ENCODE measurements at regions of chr13 and their contacts with region 1.

Region 1: GRCh38 chr13:29771247-29771646 is 79.2 kb downstream of the UBL3 start:
- DNase-seq: peak; percentile 55 to 79 (median 73)
- H3K4me3 ChIP-seq: no peak overlapping the region
- H3K27ac ChIP-seq: no peak overlapping the region
- H3K4me1 ChIP-seq: no peaks in the 10 kb centered on the region
- H3K27me3 ChIP-seq: no peaks in the 10 kb centered on the region

Region 2: DNA sequence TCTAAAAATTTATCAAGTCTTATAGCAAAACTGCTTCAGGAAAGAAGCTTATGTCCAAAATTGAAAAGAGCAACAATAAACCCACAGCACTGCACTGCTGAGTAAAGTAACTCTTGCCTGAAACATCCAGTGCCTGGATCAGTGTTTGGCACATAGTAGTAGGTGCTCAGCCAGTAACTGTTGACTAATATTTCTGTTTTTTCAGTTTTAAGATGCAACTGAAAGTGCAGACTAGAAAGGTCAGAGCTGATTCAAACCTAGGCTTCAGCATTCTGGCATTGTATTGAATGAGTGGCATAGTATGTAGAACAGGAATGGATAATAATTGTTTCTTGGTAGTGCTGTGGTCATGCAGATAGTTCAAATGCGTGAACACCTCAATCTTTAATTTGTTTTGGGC is 11.6 kb after region 1 on chr13:
- CTCF ChIA-PET with region 1: interaction called, 14 read pairs
- POLR2A ChIA-PET with region 1: no interaction called
- DNase-seq: no peak
- H3K4me3 ChIP-seq: no peak overlapping the region
- H3K27ac ChIP-seq: no peak overlapping the region
- H3K4me1 ChIP-seq: no peaks in the 10 kb centered on the region
- H3K27me3 ChIP-seq: no peaks in the 10 kb centered on the region

Region 3: DNA sequence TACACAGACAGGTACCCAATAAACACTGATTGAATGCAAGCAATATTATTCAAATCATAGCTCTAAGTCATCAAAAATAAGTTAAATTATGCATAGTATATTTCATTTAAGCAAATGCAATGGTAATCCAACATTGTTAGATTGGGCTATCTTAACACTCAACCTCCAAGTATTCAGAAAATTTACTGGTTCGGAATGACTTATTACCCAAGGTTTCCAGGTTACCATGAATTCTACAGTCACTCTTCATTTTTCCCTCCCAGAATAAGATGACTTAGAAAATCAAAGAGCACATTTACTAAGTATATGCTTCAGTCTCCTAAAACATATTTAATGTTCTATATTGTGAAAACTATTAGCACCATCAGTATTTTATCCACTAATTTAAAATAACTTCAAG is 73.2 kb after region 1 on chr13:
- CTCF ChIA-PET with region 1: interaction called, 17 read pairs
- POLR2A ChIA-PET with region 1: no interaction called
- DNase-seq: no peak
- H3K4me3 ChIP-seq: no peak overlapping the region
- H3K27ac ChIP-seq: no peak overlapping the region
- H3K4me1 ChIP-seq: peaks cover 8 to 22% (median 12%) of the 10 kb centered on the region in 4 experiments
- H3K27me3 ChIP-seq: no peaks in the 10 kb centered on the region

Region 4: DNA sequence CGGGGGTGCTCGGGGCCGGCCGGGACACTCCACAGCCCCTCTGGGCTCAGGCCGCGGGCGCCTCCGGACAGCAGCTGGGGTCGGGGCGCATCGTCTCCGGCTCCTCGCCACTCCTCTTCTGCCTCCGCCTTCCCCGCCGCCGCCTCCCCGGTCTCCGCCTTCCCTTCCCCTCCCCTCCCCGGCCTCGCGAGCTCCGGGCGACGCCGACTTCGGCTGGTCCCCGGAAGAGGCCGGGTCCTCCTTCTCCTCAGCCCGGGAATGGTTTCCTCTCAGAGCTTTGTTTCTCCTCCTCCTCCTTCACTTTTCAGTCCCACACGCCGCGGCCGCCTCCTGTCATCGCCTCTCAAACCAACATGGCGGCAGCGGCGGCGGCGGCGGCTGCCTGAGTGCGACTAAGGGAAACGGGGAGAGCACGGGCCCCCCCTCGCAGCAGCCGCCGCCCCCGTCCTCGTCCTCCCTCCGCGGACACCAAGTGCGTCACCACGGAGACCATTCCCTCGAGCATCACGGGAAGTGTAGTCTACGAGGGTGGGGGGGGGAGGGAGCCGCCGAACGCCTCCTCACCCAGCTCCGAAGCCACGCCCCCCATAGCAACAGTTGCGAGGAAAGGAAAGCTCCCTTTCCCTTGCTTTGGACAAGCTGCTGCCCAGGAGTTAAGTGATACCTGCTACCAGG is 79.1 kb after region 1 on chr13 and contains the start of gene UBL3:
- CTCF ChIA-PET with region 1: interaction called, 17 read pairs
- POLR2A ChIA-PET with region 1: no interaction called
- DNase-seq: peak; percentile 96 to 98 (median 97)
- H3K4me3 ChIP-seq: peak within 1 kb of the TSS; percentile 87 to 100 (median 98)
- H3K27ac ChIP-seq: peak within 1 kb of the TSS; percentile 58 to 81
- H3K4me1 ChIP-seq: peaks cover 8 to 24% (median 14%) of the 10 kb centered on the region in 4 experiments
- H3K27me3 ChIP-seq: no peaks in the 10 kb centered on the region

Region 5: DNA sequence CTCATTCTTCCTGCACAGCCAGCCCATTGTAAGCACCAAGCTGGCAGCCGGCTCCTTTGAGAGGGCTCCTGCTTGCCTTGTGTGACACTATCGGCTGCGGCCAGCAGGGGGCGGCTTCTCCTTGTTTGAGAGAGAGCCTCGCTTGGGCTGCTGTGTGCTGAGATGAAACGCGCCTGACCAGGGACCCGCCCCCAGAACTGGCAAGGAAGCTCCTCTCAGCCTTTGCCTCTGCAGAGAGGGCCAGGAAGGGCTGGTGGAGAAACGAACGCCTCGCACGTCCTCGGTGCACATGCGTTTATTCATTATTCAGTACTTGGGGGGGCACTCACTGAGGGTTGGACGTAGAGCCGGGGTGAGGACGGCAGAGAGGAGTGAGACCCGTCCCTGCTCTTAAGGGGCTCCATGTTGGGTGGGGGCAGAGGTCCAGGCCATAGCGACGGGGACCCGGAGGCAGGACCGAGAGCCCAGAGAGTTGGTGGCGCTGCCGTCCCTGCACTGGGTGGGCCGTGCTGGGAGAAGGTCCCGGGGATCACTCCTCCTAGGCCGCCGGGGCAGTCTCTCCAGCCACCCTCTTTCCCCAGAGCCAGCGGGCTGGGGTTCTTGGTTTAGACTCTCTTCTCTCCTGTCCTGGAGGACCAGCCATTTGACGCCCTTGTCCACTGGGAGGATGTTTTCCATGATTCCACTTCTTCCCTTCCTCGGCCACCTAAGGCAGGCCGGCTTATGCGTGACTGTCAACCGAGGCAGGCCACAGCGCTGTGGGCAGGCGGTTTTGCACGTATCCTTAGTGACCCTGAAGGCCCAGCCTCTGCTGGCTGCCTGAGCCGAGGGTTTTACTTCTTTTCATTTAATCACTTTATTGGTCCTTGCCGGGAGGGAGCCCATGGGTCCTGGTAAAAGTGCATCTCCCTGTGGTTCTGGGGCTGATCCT is 361.6 kb after region 1 on chr13:
- CTCF ChIA-PET with region 1: interaction called, 10 read pairs
- POLR2A ChIA-PET with region 1: no interaction called
- DNase-seq: peak; percentile 90 to 95 (median 94)
- H3K4me3 ChIP-seq: peak overlapping the region in 1 of 7 experiments; percentile 46
- H3K27ac ChIP-seq: no peak overlapping the region
- H3K4me1 ChIP-seq: peaks cover 0 to 4% (median 3%) of the 10 kb centered on the region in 4 experiments
- H3K27me3 ChIP-seq: no peaks in the 10 kb centered on the region

Measured in common myeloid progenitor, CD34-positive (primary cell).